Activated T-helper 1 cell treated with anti-CD3 and anti-CD28 coated beads, Interleukin-12 subunit alpha, Interleukin-12 subunit beta, Interleukin-2, Interleukin-4 antibody, amounts not matched to agents 30 ng/mL and 10 ng/mL and 1 ng/mL, durations not matched to agents 14 hours and 24 hours and 36 hours (primary cell): ENCODE measurements at regions of chr1 and their contacts with region 1.

Region 1: GRCh38 chr1:54052934-54053744 is at the starts of genes TCEANC2 and TMEM59:
- DNase-seq: peak; percentile 98
- H3K4me3 Mint-ChIP-seq: no peak within 1 kb of the TSS
- H3K27ac Mint-ChIP-seq: no peak within 1 kb of the TSS
- H3K4me1 Mint-ChIP-seq: peaks cover 27% of the 10 kb centered on the region
- H3K27me3 Mint-ChIP-seq: no peaks in the 10 kb centered on the region
- total RNA-seq, gene TCEANC2: 11.8 and 12.0 TPM in 2 replicates
- total RNA-seq, gene TMEM59: 119 and 133 TPM in 2 replicates

Region 2: DNA sequence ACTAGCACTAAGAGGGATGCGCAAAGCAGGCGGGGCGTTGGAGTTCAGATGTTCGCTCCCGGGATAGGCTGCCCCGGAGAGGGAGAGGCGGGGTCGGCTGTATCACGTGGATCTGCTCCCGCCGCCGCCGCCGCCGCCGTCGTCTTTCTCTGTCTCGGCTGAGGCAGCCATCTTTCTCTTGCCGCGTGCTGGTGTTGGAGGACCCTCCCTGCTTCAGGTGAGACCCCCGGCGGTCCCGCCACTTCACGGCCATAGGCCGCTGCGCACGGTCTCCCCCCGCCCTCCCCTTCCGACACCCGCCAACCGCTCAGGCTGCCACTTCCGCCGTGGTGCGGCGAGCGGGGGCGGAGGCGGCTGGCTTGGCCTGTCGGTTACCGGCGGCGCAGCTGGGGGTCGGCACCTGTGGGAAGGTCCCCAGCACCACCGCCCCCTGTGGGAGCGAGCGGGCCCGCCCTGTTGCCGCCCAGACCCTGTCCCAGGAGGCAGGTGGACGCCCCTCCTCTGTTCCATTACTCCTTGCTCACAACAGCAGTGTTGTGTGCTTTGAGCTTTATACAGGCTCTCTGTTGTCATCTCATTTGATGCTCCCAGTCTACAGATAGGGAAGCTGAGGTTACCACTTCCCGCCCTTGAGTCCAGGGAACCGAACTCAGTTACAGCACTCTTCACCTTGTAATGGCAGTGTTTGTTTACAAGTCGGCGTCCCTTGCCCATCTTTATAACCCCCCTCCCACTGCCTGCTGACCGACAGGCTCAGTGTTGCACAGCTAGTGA is 1996.8 kb before region 1 on chr1 and contains the start of gene BTF3L4:
- intact Hi-C with region 1: loop called (anchors 5 kb)
- DNase-seq: peak; percentile 92
- H3K4me3 Mint-ChIP-seq: peak within 1 kb of the TSS; percentile 100
- H3K27ac Mint-ChIP-seq: peak within 1 kb of the TSS; percentile 100
- H3K4me1 Mint-ChIP-seq: peaks cover 72% of the 10 kb centered on the region
- H3K27me3 Mint-ChIP-seq: no peaks in the 10 kb centered on the region
- total RNA-seq, gene BTF3L4: 44.9 and 47.5 TPM in 2 replicates

Region 3: GRCh38 chr1:53837924-53838652 is 215.1 kb before region 1 on chr1 and contains the start of gene NDC1:
- intact Hi-C with region 1: loop called (anchors 1 kb)
- DNase-seq: peak; percentile 86
- H3K4me3 Mint-ChIP-seq: peak within 1 kb of the TSS; percentile 100
- H3K27ac Mint-ChIP-seq: peak within 1 kb of the TSS; percentile 98
- H3K4me1 Mint-ChIP-seq: peaks cover 26% of the 10 kb centered on the region
- H3K27me3 Mint-ChIP-seq: peaks cover 4% of the 10 kb centered on the region
- total RNA-seq, gene NDC1: 33.2 and 38.2 TPM in 2 replicates

Region 4: GRCh38 chr1:53919675-53920066 is 133.5 kb before region 1 on chr1:
- intact Hi-C with region 1: no loop called
- DNase-seq: no peak
- H3K4me3 Mint-ChIP-seq: no peak overlapping the region
- H3K27ac Mint-ChIP-seq: peak overlapping the region; percentile 90
- H3K4me1 Mint-ChIP-seq: peaks cover 48% of the 10 kb centered on the region
- H3K27me3 Mint-ChIP-seq: no peaks in the 10 kb centered on the region

Region 5: GRCh38 chr1:54016313-54017262 is 36.6 kb before region 1 on chr1:
- intact Hi-C with region 1: no loop called
- DNase-seq: no peak
- H3K4me3 Mint-ChIP-seq: no peak overlapping the region
- H3K27ac Mint-ChIP-seq: no peak overlapping the region
- H3K4me1 Mint-ChIP-seq: no peaks in the 10 kb centered on the region
- H3K27me3 Mint-ChIP-seq: peaks cover 2% of the 10 kb centered on the region

Region 6: DNA sequence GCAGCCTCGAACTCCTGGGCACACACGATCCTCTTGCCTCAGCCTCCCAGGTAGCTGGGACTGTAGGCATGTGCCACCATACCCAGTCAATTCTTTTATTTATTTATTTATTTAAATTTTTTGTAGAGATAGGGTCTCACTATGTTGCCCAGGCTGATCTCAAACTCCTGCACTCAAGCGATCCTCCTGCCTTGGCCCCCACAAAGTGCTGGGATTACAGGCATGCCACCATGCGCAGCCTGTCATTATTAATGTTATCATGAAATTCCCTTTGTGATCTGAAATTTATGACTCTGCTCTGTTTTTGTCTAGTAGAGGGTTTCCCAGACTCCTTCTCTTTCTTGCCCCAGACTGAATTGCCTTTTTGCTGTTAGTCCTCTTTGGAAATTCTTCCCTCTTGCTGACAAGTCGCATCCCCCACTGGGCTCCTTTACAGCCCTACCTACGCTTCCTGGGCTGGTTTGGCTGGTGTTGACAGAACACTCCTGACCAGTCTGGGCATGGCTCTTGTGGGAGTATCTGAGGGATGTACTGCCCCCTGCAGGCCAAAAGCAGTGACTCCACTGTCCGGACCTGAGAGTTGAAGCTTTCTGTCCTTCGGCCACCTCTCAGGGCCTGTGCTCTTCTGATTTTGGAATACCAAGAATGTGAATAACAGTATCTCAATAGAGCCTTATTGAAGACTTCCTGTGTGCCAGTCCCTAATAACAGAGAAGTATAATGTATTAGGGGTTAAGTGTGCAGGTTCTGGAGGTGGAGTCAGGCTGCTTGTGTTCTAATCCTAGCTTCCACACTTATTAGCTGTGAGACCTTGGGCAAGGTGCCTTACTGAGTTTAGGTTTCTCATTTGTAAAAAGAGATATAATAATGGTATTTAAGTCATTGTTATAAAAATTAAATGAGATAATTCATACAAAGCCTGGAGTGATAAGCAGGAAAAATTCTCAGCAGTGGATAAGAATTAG is 28.4 kb after region 1 on chr1:
- intact Hi-C with region 1: loop called (anchors 1 kb)
- DNase-seq: peak; percentile 33
- H3K4me3 Mint-ChIP-seq: no peak overlapping the region
- H3K27ac Mint-ChIP-seq: no peak overlapping the region
- H3K4me1 Mint-ChIP-seq: peaks cover 11% of the 10 kb centered on the region
- H3K27me3 Mint-ChIP-seq: no peaks in the 10 kb centered on the region

Region 7: DNA sequence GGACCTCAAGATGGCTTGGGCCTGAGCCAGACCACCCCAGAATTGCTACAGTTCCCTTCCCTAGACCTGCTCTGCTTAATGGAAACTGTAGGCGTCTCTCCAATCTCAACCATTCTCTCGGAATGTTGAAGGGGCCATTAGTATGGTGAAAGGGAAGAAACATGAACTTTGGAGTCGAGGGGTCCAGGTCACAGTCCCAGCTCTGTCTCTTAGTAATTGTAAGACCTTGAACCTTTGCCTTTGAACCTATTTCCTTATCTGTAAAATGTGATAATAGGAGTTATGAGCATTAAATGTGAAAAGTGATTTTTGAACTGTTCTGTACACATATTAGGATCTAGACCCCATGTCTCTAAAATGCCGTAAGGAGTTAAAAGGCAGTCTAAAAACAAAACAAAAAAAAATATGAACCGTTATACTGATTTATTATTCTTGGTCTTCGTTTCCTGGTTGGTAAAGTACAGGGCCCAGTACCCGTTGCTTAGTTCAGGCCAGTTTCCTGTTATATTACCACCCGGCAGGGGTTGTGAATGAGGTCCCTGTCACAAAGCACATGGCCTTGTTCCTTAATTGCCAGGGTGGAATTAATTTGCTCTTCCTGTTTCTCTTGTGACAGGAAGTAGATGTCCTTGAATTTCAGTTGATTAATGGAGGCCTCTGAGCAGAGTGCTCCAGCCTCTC is 42.5 kb after region 1 on chr1:
- intact Hi-C with region 1: no loop called
- DNase-seq: no peak
- H3K4me3 Mint-ChIP-seq: no peak overlapping the region
- H3K27ac Mint-ChIP-seq: no peak overlapping the region
- H3K4me1 Mint-ChIP-seq: no peaks in the 10 kb centered on the region
- H3K27me3 Mint-ChIP-seq: no peaks in the 10 kb centered on the region

Region 8: GRCh38 chr1:54121482-54122134 is 68.5 kb after region 1 on chr1:
- intact Hi-C with region 1: no loop called
- DNase-seq: peak; percentile 49
- H3K4me3 Mint-ChIP-seq: no peak overlapping the region
- H3K27ac Mint-ChIP-seq: no peak overlapping the region
- H3K4me1 Mint-ChIP-seq: no peaks in the 10 kb centered on the region
- H3K27me3 Mint-ChIP-seq: peaks cover 11% of the 10 kb centered on the region

Region 9: GRCh38 chr1:54406339-54407153 is 353.4 kb after region 1 on chr1 and contains the start of gene SSBP3:
- intact Hi-C with region 1: loop called (anchors 1 kb)
- DNase-seq: peak; percentile 91
- H3K4me3 Mint-ChIP-seq: peak within 1 kb of the TSS; percentile 88
- H3K27ac Mint-ChIP-seq: peak within 1 kb of the TSS; percentile 83
- H3K4me1 Mint-ChIP-seq: peaks cover 72% of the 10 kb centered on the region
- H3K27me3 Mint-ChIP-seq: no peaks in the 10 kb centered on the region
- total RNA-seq, gene SSBP3: 98.0 and 110 TPM in 2 replicates

Region 10: DNA sequence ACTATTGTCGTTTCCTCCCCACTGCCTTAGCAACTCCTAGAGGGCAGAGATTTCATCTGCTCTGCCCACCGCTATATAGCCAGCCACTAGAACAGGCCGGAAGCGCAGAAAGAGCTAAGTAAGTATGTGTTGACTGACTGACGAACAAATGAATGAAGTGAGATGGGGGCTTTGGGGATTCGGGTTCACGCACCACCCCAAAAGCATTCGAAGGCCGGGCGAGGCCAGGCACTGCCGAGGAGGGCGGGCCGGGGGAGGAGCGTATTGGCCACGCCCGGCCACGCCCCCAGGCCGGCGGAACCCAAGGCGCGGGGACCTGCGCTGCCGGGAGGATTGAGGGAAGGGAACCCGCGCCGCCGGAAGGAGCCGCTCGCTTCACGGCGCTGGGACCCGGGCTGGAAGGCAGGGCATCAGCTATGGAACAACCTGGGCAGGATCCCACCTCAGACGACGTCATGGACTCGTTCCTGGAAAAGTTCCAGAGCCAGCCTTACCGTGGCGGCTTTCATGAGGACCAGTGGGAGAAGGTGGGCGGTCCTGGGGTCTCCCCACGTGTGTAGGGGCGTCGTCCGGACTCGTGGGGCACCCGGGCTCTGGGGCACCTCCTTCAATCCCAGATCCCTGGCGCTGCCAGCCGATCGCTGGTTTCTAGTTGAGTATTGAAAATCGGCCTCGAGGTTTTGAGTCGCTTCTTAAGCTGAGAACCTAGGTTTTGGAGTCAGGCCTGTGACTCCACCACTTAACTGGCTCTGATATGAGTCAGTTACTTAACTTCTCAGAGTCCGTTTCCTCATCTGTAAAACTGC is 662.6 kb after region 1 on chr1 and contains the start of gene TTC4:
- intact Hi-C with region 1: loop called (anchors 1 kb)
- DNase-seq: peak; percentile 84
- H3K4me3 Mint-ChIP-seq: peak within 1 kb of the TSS; percentile 94
- H3K27ac Mint-ChIP-seq: peak within 1 kb of the TSS; percentile 77
- H3K4me1 Mint-ChIP-seq: peaks cover 31% of the 10 kb centered on the region
- H3K27me3 Mint-ChIP-seq: peaks cover 6% of the 10 kb centered on the region
- total RNA-seq, gene TTC4: 43.7 TPM in 2 replicates